BJ (cell line): ENCODE measurements at regions of chr14 and their contacts with region 1.

Region 1: GRCh38 chr14:88667555-88668273 is 104.9 kb downstream of the ZC3H14 start:
- DNase-seq: no peak
- H3K4me3 ChIP-seq: no peak overlapping the region
- H3K27me3 ChIP-seq: 0 out of 2 replicates have a peak, but pooled peaks cover 2% of the 10 kb centered on the region
- CTCF ChIP-seq: peak; percentile 90

Region 2: GRCh38 chr14:88682495-88683114 is 14.9 kb after region 1 on chr14:
- CTCF ChIA-PET with region 1: interaction called, 36 read pairs
- POLR2A ChIA-PET with region 1: no interaction called
- DNase-seq: no peak
- H3K4me3 ChIP-seq: no peak overlapping the region
- H3K27me3 ChIP-seq: no peaks in the 10 kb centered on the region
- CTCF ChIP-seq: no peak